ENCODE measurements at regions of chrX and their contacts with region 1.

Region 1: GRCh38 chrX:129606918-129607317 is 47.8 kb downstream of the APLN start:
- DNase-seq: peak; percentile 49
- ATAC-seq: no peak
- H3K4me3 Mint-ChIP-seq: no peak overlapping the region
- H3K27ac Mint-ChIP-seq: no peak overlapping the region
- H3K4me1 Mint-ChIP-seq: peaks cover 15% of the 10 kb centered on the region; the same call in 1 of the 2 replicates
- H3K27me3 Mint-ChIP-seq: 0 out of 2 replicates have a peak, but pooled peaks cover 5% of the 10 kb centered on the region
- CTCF ChIP-seq: peak; percentile 47

Region 2: DNA sequence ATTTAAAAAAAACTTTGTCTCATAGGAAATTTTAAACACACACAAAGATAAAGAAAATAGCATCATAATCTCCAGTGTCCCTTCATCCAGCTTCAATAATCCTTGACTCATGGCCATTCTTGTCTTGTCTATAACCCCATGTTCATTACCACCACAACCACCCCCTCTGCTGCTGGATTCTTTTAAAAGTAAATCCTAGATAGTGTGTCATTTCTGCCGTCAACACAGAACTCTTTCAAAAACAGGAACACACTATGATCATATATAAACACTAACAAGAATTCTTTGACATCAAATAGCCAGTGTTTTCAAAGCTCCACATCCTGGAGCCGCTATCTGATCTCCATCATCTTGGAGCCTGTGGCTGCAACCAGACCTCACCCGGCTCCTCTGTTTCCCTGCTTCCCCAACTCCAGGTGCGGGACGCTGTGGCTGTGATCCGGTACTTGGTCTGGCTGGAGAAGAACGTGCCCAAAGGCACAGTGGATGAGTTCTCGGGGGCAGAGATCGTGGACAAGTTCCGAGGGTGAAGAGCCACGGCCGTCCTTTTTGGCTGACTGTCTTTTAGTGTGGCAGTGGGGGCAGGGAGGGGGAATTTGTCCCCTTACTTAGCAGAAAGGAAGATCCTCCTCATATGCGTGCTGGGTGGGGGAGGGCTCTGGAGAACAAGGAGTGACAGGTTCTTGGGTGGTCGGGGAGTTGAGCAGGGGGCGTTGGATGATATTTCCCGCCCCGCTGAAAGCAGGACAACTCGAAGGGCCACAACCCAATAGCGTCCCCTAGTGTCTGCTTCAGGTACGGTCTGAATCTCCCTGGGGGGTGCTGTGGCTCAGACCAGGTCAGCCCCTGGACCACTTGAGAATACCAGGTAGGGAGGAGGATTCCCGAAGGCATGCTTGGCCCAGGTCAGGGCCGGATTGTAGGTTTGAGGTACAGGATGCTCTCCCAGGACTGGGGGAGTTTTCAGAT is 147.4 kb after region 1 on chrX:
- CTCF ChIA-PET with region 1: interaction called, 22 read pairs
- POLR2A ChIA-PET with region 1: no interaction called
- DNase-seq: peak; percentile 72
- ATAC-seq: peak; percentile 60
- H3K4me3 Mint-ChIP-seq: no peak overlapping the region
- H3K27ac Mint-ChIP-seq: no peak overlapping the region
- H3K4me1 Mint-ChIP-seq: peaks cover 21% of the 10 kb centered on the region
- H3K27me3 Mint-ChIP-seq: no peaks in the 10 kb centered on the region; the same call in 1 of the 2 replicates
- CTCF ChIP-seq: peak; percentile 72

Measured in WTC11 (cell line).